Caco-2 (cell line): ENCODE measurements at regions of chrX and their contacts with region 1.

Region 1: DNA sequence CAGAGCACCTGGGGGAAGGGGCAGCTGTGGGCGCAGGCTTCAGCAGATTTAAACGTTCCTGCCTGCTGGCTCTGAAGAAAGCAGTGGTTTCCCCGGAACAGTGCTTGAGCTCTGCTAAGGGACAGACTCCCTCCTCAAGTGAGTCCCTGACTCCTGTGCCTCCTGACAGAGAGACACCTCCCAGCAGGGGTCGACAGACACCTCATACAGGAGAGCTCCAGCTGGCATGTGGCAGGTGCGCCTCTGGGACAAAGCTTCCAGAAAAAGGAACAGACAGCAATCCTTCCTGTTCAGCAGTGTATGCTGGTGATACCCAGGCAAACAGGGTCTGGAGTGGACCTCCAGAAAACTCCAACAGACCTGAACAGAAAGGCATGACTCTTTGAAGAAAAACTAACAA is 68.1 kb downstream of the ZC4H2 start:
- DNase-seq: peak; percentile 19 to 32
- H3K4me3 ChIP-seq: no peak overlapping the region
- H3K4me3 Mint-ChIP-seq: no peak overlapping the region
- H3K27ac Mint-ChIP-seq: no peak overlapping the region
- H3K4me1 ChIP-seq: no peaks in the 10 kb centered on the region
- H3K4me1 Mint-ChIP-seq: no peaks in the 10 kb centered on the region
- H3K27me3 ChIP-seq: no peaks in the 10 kb centered on the region
- H3K27me3 Mint-ChIP-seq: no peaks in the 10 kb centered on the region
- CTCF ChIP-seq: peak in 1 of 2 experiments; percentile 40

Region 2: DNA sequence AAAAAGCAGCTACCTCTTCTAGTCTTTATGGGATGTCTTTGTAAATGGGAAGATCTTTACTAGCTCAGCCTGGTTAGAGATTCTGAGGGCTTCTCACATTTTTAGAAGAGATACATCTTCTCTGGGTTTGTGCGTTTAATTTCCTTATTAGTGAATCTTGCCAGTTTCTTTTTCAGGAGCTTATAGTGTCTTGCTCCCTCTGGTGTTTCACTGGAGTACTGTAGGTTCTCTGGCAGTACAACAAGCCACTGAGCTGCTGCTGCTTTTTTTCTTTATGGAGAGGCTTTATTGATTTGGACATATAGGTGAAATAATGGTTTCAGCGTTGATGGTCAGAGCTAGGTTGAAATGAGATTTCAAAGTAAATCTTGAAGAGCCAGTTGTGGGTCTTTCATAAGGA is 543.5 kb after region 1 on chrX:
- CTCF ChIA-PET with region 1: interaction called, 3 read pairs
- POLR2A ChIA-PET with region 1: no interaction called
- intact Hi-C with region 1: loop called (anchors 5 kb)
- DNase-seq: peak in 1 of 2 experiments; percentile 24
- H3K4me3 ChIP-seq: no peak overlapping the region
- H3K4me3 Mint-ChIP-seq: no peak overlapping the region
- H3K27ac Mint-ChIP-seq: no peak overlapping the region
- H3K4me1 ChIP-seq: no peaks in the 10 kb centered on the region
- H3K4me1 Mint-ChIP-seq: no peaks in the 10 kb centered on the region
- H3K27me3 ChIP-seq: no peaks in the 10 kb centered on the region
- H3K27me3 Mint-ChIP-seq: no peaks in the 10 kb centered on the region
- CTCF ChIP-seq: peak; percentile 37 to 48